PC-9 (cell line): ENCODE measurements at regions of chr1 and their contacts with region 1.

Region 1: GRCh38 chr1:18875107-18875795 is 15.8 kb upstream of the TAS1R2 start:
- DNase-seq: peak; percentile 55 to 78
- H3K4me3 ChIP-seq: no peak overlapping the region
- H3K27ac ChIP-seq: no peak overlapping the region
- H3K4me1 ChIP-seq: no peaks in the 10 kb centered on the region
- H3K27me3 ChIP-seq: no peaks in the 10 kb centered on the region
- CTCF ChIP-seq: peak; percentile 83

Region 2: DNA sequence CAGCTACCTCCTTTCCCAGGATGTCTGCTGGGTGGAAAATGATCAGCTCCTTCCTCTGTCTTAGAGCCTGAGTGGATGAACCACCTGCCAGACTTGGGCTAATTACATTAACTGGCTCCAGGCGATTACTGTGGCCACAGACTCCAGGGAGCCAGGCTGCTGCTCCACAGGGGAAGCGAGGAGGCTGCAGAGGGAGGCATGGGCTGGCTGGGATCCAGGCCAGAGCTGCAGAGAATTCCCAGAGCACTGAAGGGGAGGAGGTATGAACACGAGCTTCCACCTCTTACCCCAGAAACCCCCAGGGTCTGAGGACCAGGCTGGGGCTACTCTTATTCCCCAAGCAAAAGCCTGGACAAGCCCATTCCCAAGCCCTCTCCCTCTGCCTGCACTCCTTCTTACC is 530.5 kb before region 1 on chr1:
- CTCF ChIA-PET with region 1: interaction called, 15 read pairs
- POLR2A ChIA-PET with region 1: no interaction called
- intact Hi-C with region 1: no loop called
- DNase-seq: no peak
- H3K4me3 ChIP-seq: no peak overlapping the region
- H3K27ac ChIP-seq: no peak overlapping the region
- H3K4me1 ChIP-seq: no peaks in the 10 kb centered on the region
- H3K27me3 ChIP-seq: peaks cover 2% of the 10 kb centered on the region; the same call in 1 of the 2 replicates
- CTCF ChIP-seq: no peak

Region 3: DNA sequence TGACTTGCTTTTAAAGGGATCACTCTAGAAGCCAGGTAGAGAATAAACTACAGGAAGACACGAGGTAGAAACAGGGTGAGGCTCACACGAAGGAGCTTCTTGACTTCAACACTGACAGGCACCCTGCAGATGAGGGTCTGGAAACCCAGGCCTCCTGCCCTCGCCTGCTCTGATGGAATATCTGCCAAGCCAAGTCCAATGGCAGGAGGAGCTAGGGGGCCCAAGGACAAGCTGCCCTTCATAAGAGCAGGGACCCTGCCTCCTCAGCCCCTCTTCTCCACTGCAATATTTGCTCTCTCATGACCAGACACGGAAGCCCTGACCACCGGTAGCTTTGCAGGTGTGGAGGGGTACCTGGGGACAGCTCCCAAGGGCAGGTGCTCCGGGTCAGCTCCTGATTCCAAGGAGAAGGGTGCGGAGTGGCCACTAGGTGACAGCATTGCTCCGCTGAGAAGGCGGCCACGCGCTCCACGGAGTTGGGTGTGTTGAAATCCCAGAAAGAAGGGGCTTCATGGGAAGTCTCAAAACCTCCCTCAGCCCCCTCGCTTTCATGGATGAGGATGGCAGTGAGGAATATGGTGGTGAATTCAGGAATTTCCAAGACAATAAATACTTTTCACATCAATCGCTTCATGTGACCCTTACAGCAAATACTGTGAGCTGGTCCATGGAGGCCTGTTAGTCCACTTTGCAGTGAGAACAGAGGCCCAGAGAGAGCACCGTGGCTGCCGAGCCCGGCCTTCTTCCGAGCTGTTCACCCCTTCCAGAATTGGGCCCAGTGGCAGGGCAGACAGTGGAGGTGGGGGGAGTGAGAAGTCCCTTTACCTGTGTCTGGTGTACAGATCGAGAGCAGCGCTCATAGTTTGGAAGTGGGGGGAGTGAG is 277.9 kb before region 1 on chr1:
- CTCF ChIA-PET with region 1: interaction called, 4 read pairs
- POLR2A ChIA-PET with region 1: no interaction called
- intact Hi-C with region 1: loop called (anchors 1 kb)
- DNase-seq: peak in 1 of 2 experiments; percentile 53
- H3K4me3 ChIP-seq: no peak overlapping the region
- H3K27ac ChIP-seq: no peak overlapping the region
- H3K4me1 ChIP-seq: no peaks in the 10 kb centered on the region
- H3K27me3 ChIP-seq: peaks cover 18% of the 10 kb centered on the region; the same call in 1 of the 2 replicates
- CTCF ChIP-seq: peak; percentile 93

Region 4: DNA sequence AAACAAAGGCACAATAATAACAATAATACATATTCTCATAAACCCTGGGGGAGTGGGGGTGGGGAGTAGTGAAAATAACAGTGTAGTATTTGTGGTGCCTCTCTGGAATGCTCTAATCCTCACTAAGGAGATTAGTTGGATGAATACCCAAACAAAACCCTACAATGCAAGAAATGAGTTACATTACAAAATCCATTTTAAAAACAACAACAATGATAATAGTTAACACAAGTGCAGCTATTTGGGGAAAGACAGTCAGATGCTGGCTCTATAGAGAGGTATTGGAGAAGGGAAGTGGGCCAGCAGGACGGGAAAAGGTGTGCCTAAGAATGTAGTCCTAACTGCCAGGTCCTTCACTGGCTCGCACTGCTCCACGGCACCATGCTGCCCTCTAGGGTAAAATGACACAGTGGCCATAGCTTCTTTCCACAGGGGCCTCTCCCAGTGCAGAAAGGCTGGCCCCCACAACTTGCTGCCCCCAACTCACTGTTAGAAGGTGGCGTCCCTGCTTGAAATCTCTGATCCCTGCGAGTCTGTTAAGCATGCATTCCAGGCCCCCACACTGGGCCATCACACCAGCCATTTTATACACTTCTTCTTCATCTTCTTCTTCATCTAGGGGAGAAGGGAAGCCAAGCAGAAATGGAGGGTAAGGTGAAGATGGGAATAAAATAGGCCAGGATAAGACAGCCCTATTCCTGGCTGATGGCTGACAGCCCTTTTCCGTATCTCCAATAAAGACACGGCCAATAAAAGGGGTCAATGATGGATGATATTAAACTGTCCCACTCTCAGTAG is 221.0 kb after region 1 on chr1:
- CTCF ChIA-PET with region 1: no interaction called
- POLR2A ChIA-PET with region 1: no interaction called
- intact Hi-C with region 1: no loop called
- DNase-seq: peak in 1 of 2 experiments; percentile 49
- H3K4me3 ChIP-seq: no peak overlapping the region
- H3K27ac ChIP-seq: no peak overlapping the region
- H3K4me1 ChIP-seq: no peaks in the 10 kb centered on the region
- H3K27me3 ChIP-seq: no peaks in the 10 kb centered on the region
- CTCF ChIP-seq: peak; percentile 53; the same call in 1 of the 2 replicates

Region 5: DNA sequence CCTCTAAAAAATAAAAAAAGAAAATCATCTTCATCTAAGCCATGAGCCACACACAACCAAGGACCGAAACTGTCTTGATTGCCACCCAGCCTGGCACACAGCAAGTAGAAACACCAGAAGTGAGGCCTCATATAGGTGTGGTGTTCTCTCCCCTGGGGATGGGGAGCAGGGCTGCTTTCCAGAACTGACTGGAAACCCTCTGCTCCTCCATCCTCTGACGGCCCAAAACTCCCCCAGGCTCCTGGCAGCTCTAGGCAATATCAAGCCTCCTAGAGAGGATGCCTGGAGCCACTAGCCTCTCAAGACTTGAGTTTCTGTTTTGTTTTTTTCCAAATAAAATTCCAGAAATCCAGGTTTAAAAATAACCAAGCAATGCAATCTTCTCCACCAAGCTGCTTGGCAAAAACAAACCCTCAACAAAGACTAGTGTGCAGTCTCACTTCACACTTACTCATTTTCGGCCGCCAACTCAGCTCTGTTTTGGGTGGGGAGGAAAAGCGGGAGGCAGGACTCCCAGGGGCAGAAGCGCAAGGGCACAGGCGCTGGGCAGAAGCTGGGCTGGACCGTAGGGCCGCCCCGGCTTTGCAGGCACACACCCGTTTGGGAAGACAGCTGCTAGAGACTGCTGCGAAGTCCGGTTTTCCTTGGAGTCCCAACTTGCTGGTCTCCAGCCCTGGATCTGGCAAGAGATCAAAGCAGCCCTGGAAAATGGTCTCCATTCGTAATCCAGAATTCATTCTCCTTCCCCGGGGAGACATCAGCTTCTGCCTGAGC is 688.3 kb after region 1 on chr1:
- CTCF ChIA-PET with region 1: interaction called, 15 read pairs
- POLR2A ChIA-PET with region 1: no interaction called
- intact Hi-C with region 1: no loop called
- DNase-seq: no peak
- H3K4me3 ChIP-seq: no peak overlapping the region
- H3K27ac ChIP-seq: no peak overlapping the region
- H3K4me1 ChIP-seq: no peaks in the 10 kb centered on the region
- H3K27me3 ChIP-seq: no peaks in the 10 kb centered on the region
- CTCF ChIP-seq: no peak